Transverse colon (tissue), 4 donors: ENCODE measurements at regions of chr9 and their contacts with region 1.

Region 1: GRCh38 chr9:119289740-119290433 is 79.3 kb downstream of the BRINP1 start:
- DNase-seq: peak; percentile 35
- H3K4me3 ChIP-seq: no peak overlapping the region
- H3K27ac ChIP-seq: no peak overlapping the region
- H3K4me1 ChIP-seq: no peaks in the 10 kb centered on the region
- H3K27me3 ChIP-seq: no peaks in the 10 kb centered on the region
- CTCF ChIP-seq: peak; percentile 72 to 82 (median 80)
- EP300 ChIP-seq: no peak
- POLR2A ChIP-seq: no peak

Region 2: GRCh38 chr9:117782931-117783788 is 1506.7 kb before region 1 on chr9:
- in situ Hi-C with region 1: loop called in 1 of 4 experiments (anchors 25 kb)
- intact Hi-C with region 1: no loop called
- DNase-seq: peak; percentile 77
- H3K4me3 ChIP-seq: peak overlapping the region in 3 of 4 donors; percentile 26 to 56 (median 30)
- H3K27ac ChIP-seq: peak overlapping the region; percentile 28 to 69 (median 50)
- H3K4me1 ChIP-seq: peaks cover 0 to 14% (median 6%) of the 10 kb centered on the region in 4 donors
- H3K27me3 ChIP-seq: no peaks in the 10 kb centered on the region
- CTCF ChIP-seq: peak; percentile 62 to 89 (median 74)
- EP300 ChIP-seq: no peak
- POLR2A ChIP-seq: no peak

Region 3: GRCh38 chr9:118595719-118596305 is 694.1 kb before region 1 on chr9:
- in situ Hi-C with region 1: no loop called
- intact Hi-C with region 1: loop called (anchors 10 kb)
- DNase-seq: peak; percentile 7
- H3K4me3 ChIP-seq: no peak overlapping the region
- H3K27ac ChIP-seq: no peak overlapping the region
- H3K4me1 ChIP-seq: no peaks in the 10 kb centered on the region
- H3K27me3 ChIP-seq: no peaks in the 10 kb centered on the region
- CTCF ChIP-seq: peak in 3 of 5 experiments; percentile 24 to 27 (median 26)
- EP300 ChIP-seq: no peak
- POLR2A ChIP-seq: no peak

Region 4: GRCh38 chr9:119441338-119441737 is 151.5 kb after region 1 on chr9:
- in situ Hi-C with region 1: no loop called
- intact Hi-C with region 1: no loop called
- DNase-seq: no peak
- H3K4me3 ChIP-seq: no peak overlapping the region
- H3K27ac ChIP-seq: no peak overlapping the region
- H3K4me1 ChIP-seq: no peaks in the 10 kb centered on the region
- H3K27me3 ChIP-seq: no peaks in the 10 kb centered on the region
- CTCF ChIP-seq: no peak
- EP300 ChIP-seq: no peak
- POLR2A ChIP-seq: no peak

Region 5: GRCh38 chr9:119500072-119500771 is 210.3 kb after region 1 on chr9:
- in situ Hi-C with region 1: no loop called
- intact Hi-C with region 1: no loop called
- DNase-seq: no peak
- H3K4me3 ChIP-seq: no peak overlapping the region
- H3K27ac ChIP-seq: no peak overlapping the region
- H3K4me1 ChIP-seq: no peaks in the 10 kb centered on the region
- H3K27me3 ChIP-seq: no peaks in the 10 kb centered on the region
- CTCF ChIP-seq: no peak
- EP300 ChIP-seq: no peak
- POLR2A ChIP-seq: no peak